Head of caudate nucleus (tissue), 42 donors: ENCODE measurements at regions of chr3 and their contacts with region 1.

Region 1: DNA sequence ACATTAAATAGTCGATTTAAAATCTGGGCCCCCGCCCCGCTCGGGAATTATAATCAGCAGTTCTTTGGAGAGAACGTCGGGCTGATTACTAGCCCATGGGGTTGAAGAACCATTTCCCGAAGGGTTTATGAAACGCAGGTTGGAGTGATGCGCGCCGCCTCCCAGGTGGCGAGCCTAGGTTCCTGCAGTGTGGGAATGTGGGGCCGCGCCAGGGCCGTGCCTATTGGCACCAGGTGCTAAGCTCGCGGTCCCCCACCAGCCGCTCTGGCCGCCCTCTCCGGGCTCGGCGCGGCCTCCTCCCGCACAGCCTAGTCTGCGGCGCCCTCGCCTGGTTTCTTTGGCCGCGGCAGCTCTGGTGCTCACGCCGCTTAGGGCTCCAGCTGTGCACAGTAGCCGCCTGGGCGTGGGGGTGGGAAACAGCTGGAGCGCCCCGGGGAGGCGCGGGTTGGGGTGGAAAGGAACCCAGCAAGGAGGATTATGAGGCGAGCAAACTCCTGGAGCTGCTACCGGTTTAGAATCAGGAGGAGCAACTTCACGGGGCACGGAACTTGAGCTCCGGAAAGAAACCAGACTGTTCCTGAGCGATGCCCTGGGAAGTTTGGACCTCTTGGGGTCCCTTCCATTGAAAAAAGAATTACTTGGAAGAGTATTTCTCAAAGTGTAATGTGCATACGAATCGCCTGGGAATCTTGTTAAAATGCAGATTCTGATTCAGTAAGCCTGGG is 5.6 kb upstream of the MECOM start:
- DNase-seq: peak in 38 of 42 donors; percentile 22 to 83 (median 64)

Region 2: DNA sequence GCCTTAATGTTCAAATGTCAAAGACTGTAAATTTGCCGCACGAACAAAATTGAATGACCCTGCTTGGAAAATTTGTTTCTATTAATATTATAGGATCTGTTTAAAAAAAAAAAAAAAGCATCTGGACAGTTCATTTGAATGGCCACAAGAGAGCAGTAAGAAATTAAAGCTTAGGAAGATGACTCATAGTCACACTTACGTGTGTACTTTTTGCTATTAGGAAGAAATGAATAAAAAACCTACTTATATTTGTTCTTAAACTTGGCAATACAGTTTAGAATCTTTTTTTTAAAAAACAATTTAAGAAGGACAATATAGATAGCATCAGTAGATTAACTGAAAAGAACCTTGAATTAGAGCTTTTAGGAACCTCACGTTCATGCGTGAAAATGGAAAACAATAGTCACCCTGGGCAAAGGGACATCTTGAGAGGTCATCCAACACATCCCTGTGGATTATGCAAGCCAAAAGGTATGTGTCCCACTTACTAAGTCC is 627.4 kb before region 1 on chr3:
- intact Hi-C with region 1: loop called (anchors 10 kb)
- DNase-seq: no peak

Region 3: GRCh38 chr3:169149349-169149890 is 519.7 kb before region 1 on chr3:
- intact Hi-C with region 1: loop called (anchors 2 kb)
- DNase-seq: peak; percentile 54 to 91 (median 81)